ENCODE measurements at regions of chr20 and their contacts with region 1.

Region 1: GRCh38 chr20:59940174-59940971 is at the starts of genes FAM217B and PPP1R3D:
- DNase-seq: peak; percentile 98
- ATAC-seq: peak; percentile 94 to 97 (median 96)
- H3K4me3 ChIP-seq: peak within 1 kb of the TSS; percentile 58 to 86 (median 76)
- H3K27ac ChIP-seq: peak within 1 kb of the TSS; percentile 82 to 100 (median 96)
- H3K4me1 ChIP-seq: peaks cover 9 to 73% (median 66%) of the 10 kb centered on the region in 9 donors
- H3K27me3 ChIP-seq: no peaks in the 10 kb centered on the region
- CTCF ChIP-seq: peak in 6 of 9 donors; percentile 1 to 49 (median 29)
- total RNA-seq, gene FAM217B: 16.6 to 38.3 (median 28.0) TPM
- total RNA-seq, gene PPP1R3D: 7.6 to 14.3 (median 10.1) TPM

Region 2: DNA sequence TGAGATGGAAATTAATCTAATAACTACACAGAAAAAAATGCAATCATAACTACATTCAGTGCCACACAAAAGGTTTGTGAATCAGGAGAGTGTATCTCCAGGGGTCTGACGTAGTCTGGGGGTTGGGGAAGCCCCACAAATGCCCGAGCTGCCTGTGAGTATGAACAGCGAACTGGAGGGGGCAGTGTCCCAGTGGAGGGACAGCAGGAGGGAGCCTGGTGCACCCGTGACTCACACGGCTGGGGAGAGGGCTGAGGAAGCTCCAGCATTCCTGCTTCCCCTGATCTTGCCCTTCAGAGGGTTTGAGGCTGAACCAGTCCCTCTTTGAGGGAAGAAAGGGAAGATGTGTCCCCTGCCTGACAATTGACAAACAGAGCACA is 96.7 kb after region 1 on chr20:
- intact Hi-C with region 1: loop called in 2 of 10 experiments (anchors 10 kb)
- DNase-seq: no peak
- ATAC-seq: no peak
- H3K4me3 ChIP-seq: no peak overlapping the region
- H3K27ac ChIP-seq: peak overlapping the region in 1 of 10 donors; percentile 4
- H3K4me1 ChIP-seq: peaks cover 3 to 32% (median 8%) of the 10 kb centered on the region in 9 donors
- H3K27me3 ChIP-seq: peaks cover 0 to 5% (median 0%) of the 10 kb centered on the region in 7 donors
- CTCF ChIP-seq: peak in 2 of 9 donors; percentile 8 to 11

Region 3: DNA sequence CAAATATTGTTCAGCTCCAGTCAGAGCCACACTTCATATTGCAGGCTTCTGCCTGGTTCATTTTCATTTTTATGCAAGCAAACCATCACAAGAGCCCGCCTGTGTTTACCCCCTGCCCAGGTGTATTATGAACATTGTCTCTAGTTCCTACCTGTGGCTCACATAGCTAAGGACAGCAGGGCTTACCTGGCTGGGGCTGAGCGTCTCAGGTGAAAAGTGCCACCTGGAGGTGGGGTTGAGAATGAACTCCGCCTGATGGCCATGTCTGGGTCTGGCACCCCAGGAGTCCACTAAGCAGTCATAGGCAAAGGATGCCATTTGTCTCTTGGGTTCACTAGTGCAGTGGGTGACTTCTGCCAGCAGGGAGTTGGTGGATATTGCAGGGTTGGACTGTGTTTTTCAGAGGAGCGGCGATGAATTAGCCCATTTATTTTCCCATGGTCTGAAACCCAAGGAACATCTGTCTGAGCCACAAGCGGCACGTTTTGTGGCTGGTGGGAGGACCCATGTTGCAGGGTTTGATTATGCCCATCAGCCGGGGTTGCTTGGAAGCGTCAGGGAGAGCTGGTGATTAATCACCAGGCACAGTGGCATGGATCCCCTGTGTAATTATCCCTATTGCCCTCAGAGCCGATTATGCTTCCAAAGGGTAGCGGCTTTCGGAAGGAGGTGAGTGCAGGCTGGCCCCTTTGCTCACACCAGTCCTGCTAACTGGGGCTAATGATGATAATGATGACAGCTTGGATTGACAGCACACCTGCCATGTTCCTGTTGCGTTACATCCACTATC is 110.0 kb after region 1 on chr20:
- intact Hi-C with region 1: loop called in 2 of 10 experiments (anchors 5 kb)
- DNase-seq: no peak
- ATAC-seq: no peak
- H3K4me3 ChIP-seq: no peak overlapping the region
- H3K27ac ChIP-seq: no peak overlapping the region
- H3K4me1 ChIP-seq: peaks cover 0 to 63% (median 0%) of the 10 kb centered on the region in 9 donors
- H3K27me3 ChIP-seq: peaks cover 0 to 22% (median 7%) of the 10 kb centered on the region in 7 donors
- CTCF ChIP-seq: peak in 6 of 9 donors; percentile 10 to 30 (median 23)

Measured in heart right ventricle (tissue), 16 donors.